Panc1 (cell line): ENCODE measurements at regions of chr4 and their contacts with region 1.

Region 1: DNA sequence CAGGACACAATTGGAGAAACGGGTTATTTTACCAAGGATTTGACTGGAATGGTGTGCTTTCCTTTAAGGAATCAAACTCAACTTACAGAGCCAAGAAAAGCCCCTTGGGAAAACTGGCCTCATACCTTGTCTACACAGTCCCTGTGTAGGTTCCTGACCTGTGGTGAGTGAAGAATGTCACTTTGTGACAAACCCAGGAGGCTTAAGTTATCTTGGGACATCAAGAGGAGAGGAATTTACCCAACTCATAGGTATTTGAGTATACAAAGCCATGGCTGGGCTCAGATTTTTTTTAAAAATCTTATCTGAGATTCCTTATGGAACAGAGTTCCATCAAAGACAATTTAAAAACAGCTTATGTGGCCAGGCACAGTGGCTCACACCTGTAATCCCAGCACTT is 112.1 kb downstream of the EIF4E start:
- DNase-seq: no peak
- ATAC-seq: no peak
- H3K4me3 ChIP-seq: no peak overlapping the region
- H3K27ac ChIP-seq: no peak overlapping the region
- H3K4me1 ChIP-seq: no peaks in the 10 kb centered on the region
- H3K27me3 ChIP-seq: no peaks in the 10 kb centered on the region
- CTCF ChIP-seq: no peak

Region 2: GRCh38 chr4:98786866-98787265 is 29.9 kb before region 1 on chr4:
- CTCF ChIA-PET with region 1: no interaction called
- POLR2A ChIA-PET with region 1: interaction called, 11 read pairs
- in situ Hi-C with region 1: no loop called
- intact Hi-C with region 1: no loop called
- DNase-seq: no peak
- ATAC-seq: no peak
- H3K4me3 ChIP-seq: no peak overlapping the region
- H3K27ac ChIP-seq: peak overlapping the region; percentile 41; the same call in 1 of the 2 replicates
- H3K4me1 ChIP-seq: no peaks in the 10 kb centered on the region
- H3K27me3 ChIP-seq: no peaks in the 10 kb centered on the region
- CTCF ChIP-seq: peak; percentile 49

Region 3: GRCh38 chr4:98929341-98930267 is 112.8 kb after region 1 on chr4:
- CTCF ChIA-PET with region 1: no interaction called
- POLR2A ChIA-PET with region 1: no interaction called
- in situ Hi-C with region 1: no loop called
- intact Hi-C with region 1: no loop called
- DNase-seq: peak; percentile 86
- ATAC-seq: peak; percentile 77
- H3K4me3 ChIP-seq: peak overlapping the region; percentile 67 to 75
- H3K27ac ChIP-seq: peak overlapping the region; percentile 96
- H3K4me1 ChIP-seq: peaks cover 10% of the 10 kb centered on the region
- H3K27me3 ChIP-seq: no peaks in the 10 kb centered on the region
- CTCF ChIP-seq: no peak